ENCODE measurements at regions of chrX and their contacts with region 1.

Region 1: DNA sequence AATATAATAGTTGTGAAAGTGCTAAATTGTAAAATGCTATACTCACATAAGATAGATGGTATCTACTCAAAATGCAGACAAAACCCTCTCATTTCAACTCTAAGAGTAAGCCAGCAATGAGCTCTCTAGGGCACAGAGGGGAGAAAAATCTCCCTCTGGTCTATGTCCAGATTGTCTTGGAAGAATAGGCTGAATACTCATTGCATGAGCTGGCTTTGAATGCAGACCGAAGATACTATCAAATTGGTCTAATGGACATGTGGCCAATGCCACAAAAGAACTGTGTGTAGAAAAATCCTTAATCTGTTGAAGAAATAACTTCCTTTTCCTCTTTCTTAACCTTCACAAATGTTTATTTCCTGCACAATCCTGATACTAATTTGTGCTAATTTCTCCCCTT is 3.5 kb downstream of the ZXDA start:
- DNase-seq: no peak
- H3K4me3 Mint-ChIP-seq: peak overlapping the region; percentile 53
- H3K27ac Mint-ChIP-seq: no peak overlapping the region
- H3K4me1 Mint-ChIP-seq: peaks cover 39% of the 10 kb centered on the region
- H3K27me3 Mint-ChIP-seq: no peaks in the 10 kb centered on the region

Region 2: GRCh38 chrX:56813318-56813837 is 1093.4 kb before region 1 on chrX:
- intact Hi-C with region 1: loop called (anchors 5 kb)
- DNase-seq: peak; percentile 32
- H3K4me3 Mint-ChIP-seq: peak overlapping the region; percentile 80
- H3K27ac Mint-ChIP-seq: peak overlapping the region; percentile 97
- H3K4me1 Mint-ChIP-seq: peaks cover 38% of the 10 kb centered on the region
- H3K27me3 Mint-ChIP-seq: no peaks in the 10 kb centered on the region

Measured in activated T-helper 1 cell treated with anti-CD3 and anti-CD28 coated beads, Interleukin-12 subunit alpha, Interleukin-12 subunit beta, Interleukin-2, Interleukin-4 antibody, amounts not matched to agents 30 ng/mL and 10 ng/mL and 1 ng/mL, durations not matched to agents 14 hours and 24 hours and 36 hours (primary cell).